ENCODE measurements at regions of chr3 and their contacts with region 1.

Region 1: GRCh38 chr3:171772427-171773056 is 37.7 kb downstream of the PLD1 start:
- DNase-seq: peak; percentile 38 to 67
- ATAC-seq: peak in 3 of 4 donors; percentile 51 to 76 (median 56)
- H3K4me3 ChIP-seq: no peak overlapping the region
- H3K27ac ChIP-seq: no peak overlapping the region
- H3K4me1 ChIP-seq: peaks cover 3% of the 10 kb centered on the region
- H3K27me3 ChIP-seq: no peaks in the 10 kb centered on the region
- CTCF ChIP-seq: peak; percentile 77

Region 2: DNA sequence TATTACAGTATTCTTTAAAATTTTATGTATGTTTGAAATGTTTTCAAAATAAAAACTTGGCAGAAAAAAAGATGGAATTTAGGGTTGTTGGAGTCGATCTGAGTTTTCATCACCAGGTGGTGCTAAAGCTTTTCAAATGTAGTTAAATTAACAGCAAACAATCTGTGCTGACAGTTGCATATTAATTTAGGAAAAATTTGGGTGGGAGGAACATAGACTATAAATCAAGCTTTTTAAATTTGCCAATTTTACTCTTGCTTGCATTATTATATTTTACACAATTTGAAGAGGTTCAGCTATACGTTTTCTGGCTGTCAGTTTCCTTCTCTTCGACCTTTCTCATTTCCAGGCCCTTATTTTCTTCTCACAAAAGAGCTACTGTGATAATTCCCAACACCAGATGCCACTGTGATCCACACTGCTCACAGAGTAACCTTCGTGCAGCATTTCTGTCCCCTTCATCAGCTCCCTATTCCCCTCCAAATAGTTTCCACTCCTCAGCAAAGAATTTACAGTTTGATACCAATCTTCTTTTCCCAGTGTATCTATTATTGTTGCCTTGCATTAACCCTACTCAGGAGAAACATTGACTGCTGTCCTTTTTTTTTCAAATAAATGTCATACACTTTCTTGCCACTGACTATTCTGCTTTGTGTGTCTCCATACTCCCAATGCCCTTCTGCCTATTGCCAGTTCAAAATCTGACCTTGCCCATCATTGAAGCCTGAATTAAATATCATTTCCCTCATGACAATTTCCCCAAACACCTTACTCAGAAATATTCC is 810.7 kb before region 1 on chr3:
- intact Hi-C with region 1: loop called in 1 of 2 experiments (anchors 5 kb)
- DNase-seq: no peak
- ATAC-seq: no peak
- H3K4me3 ChIP-seq: no peak overlapping the region
- H3K27ac ChIP-seq: no peak overlapping the region
- H3K4me1 ChIP-seq: no peaks in the 10 kb centered on the region
- H3K27me3 ChIP-seq: no peaks in the 10 kb centered on the region
- CTCF ChIP-seq: peak; percentile 62

Region 3: GRCh38 chr3:171658841-171659240 is 113.7 kb before region 1 on chr3:
- intact Hi-C with region 1: no loop called
- DNase-seq: no peak
- ATAC-seq: no peak
- H3K4me3 ChIP-seq: no peak overlapping the region
- H3K27ac ChIP-seq: no peak overlapping the region
- H3K4me1 ChIP-seq: peaks cover 10% of the 10 kb centered on the region
- H3K27me3 ChIP-seq: no peaks in the 10 kb centered on the region
- CTCF ChIP-seq: no peak

Region 4: DNA sequence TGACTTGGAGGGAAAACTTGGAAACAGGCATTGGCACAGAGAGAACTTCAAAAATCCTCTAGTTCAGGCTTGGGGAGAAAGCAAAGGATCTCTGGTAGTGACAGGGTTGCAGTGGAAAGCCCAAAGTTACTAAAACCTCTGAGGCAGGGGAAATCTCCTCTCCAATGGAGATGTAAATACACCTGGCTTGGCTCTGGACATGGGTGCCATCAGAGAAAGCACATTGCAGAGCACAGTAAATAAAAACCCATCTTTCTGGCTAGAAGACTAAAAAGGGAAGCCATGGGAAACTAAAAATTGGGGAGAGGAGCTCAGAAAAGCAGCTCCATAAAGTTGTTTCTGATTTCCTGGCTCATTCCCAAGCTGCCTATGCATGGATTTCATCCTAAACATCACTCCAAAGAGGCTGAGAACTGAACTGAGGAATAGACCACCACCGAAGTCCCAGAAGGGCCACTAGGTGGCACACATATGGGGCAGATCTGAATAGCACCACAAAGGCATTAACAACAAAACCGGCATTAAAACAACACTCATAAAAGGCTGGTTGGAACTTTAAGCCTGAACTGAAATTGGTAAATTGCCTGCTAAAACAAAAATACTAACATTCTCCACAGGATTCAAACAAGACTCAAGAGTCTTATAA is 68.7 kb before region 1 on chr3:
- intact Hi-C with region 1: loop called in 1 of 2 experiments (anchors 5 kb)
- DNase-seq: no peak
- ATAC-seq: no peak
- H3K4me3 ChIP-seq: no peak overlapping the region
- H3K27ac ChIP-seq: no peak overlapping the region
- H3K4me1 ChIP-seq: no peaks in the 10 kb centered on the region
- H3K27me3 ChIP-seq: no peaks in the 10 kb centered on the region
- CTCF ChIP-seq: peak; percentile 14

Region 5: GRCh38 chr3:171829841-171830517 is 57.4 kb after region 1 on chr3:
- intact Hi-C with region 1: loop called in 1 of 2 experiments (anchors 5 kb)
- DNase-seq: peak; percentile 76 to 85
- ATAC-seq: peak; percentile 71 to 85 (median 78)
- H3K4me3 ChIP-seq: no peak overlapping the region
- H3K27ac ChIP-seq: no peak overlapping the region
- H3K4me1 ChIP-seq: peaks cover 15% of the 10 kb centered on the region
- H3K27me3 ChIP-seq: no peaks in the 10 kb centered on the region
- CTCF ChIP-seq: peak; percentile 48